Activated CD8-positive, alpha-beta T cell treated with anti-CD3 and anti-CD28 coated beads for 36 hours (primary cell): ENCODE measurements at regions of chr6 and their contacts with region 1.

Region 1: GRCh38 chr6:42440778-42441696 is 10.7 kb downstream of the TRERF1 start:
- DNase-seq: no peak
- ATAC-seq: peak; percentile 34
- H3K4me3 Mint-ChIP-seq: peak overlapping the region; percentile 16
- H3K27ac Mint-ChIP-seq: peak overlapping the region; percentile 69
- H3K4me1 Mint-ChIP-seq: peaks cover 49% of the 10 kb centered on the region
- H3K27me3 Mint-ChIP-seq: no peaks in the 10 kb centered on the region
- CTCF ChIP-seq: no peak

Region 2: DNA sequence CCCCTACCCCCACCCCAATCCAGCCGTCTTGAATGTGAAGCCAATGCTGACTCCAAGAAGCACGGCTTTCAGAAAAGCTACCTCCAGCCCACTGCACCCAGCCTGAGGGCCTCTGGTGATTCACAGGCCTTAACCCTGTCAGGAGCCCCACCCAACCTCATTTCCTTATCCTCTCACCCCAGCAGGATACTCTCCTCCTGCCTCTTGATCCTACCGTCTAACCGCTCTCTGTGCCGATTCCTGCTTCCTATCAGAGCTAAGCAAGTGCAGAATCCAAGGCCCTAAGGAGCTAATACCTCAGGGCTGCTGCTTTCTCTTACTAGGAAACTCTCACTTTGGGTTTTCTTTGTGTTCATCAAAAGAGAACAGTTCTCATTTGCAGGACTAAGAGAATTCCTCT is 36.6 kb before region 1 on chr6:
- CTCF ChIA-PET with region 1: no interaction called
- POLR2A ChIA-PET with region 1: no interaction called
- intact Hi-C with region 1: no loop called
- DNase-seq: peak; percentile 65
- ATAC-seq: peak; percentile 76
- H3K4me3 Mint-ChIP-seq: no peak overlapping the region
- H3K27ac Mint-ChIP-seq: peak overlapping the region; percentile 59
- H3K4me1 Mint-ChIP-seq: peaks cover 69% of the 10 kb centered on the region
- H3K27me3 Mint-ChIP-seq: no peaks in the 10 kb centered on the region
- CTCF ChIP-seq: no peak

Region 3: DNA sequence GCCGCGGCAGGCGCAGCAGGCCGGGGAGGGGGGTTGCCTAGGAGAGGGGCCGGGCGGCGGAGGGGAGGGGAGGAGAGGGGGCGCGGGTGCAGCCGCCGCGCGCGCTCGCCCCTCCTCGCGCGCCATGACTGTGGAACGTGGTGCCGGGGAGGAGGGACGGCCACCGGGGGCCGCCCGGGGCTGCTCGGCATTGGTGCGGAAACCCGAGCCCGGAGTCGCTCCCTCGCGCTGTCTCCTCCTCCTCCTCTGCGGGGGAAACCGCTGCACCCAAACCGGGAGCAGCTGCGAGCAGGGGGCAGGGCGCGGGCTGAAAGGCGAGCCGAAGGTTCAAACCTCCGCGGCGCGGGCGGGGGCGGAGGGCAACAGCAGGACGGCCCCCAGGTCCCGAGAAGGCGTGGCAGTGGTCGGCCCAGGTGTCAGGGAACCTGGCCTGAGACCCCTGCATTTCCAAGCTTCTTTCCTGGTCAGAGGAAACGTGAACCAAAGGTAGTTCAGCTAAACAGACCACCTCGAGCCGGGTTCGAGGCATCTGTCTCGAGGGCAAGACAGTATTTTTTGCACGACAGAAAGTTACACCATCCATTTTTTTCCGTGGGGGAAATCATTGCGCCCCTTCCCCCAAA is 12.1 kb after region 1 on chr6:
- CTCF ChIA-PET with region 1: interaction called, 3 read pairs
- POLR2A ChIA-PET with region 1: interaction called, 29 read pairs
- intact Hi-C with region 1: no loop called
- DNase-seq: peak; percentile 82
- ATAC-seq: peak; percentile 72
- H3K4me3 Mint-ChIP-seq: peak overlapping the region; percentile 97
- H3K27ac Mint-ChIP-seq: peak overlapping the region; percentile 85
- H3K4me1 Mint-ChIP-seq: peaks cover 34% of the 10 kb centered on the region
- H3K27me3 Mint-ChIP-seq: peaks cover 4% of the 10 kb centered on the region
- CTCF ChIP-seq: no peak